ENCODE measurements at regions of chr20 and their contacts with region 1.

Region 1: GRCh38 chr20:1802385-1803060 is 92.7 kb upstream of the SIRPA start:
- DNase-seq: peak; percentile 56
- H3K4me3 Mint-ChIP-seq: peak overlapping the region; percentile 1
- H3K27ac Mint-ChIP-seq: no peak overlapping the region
- H3K4me1 Mint-ChIP-seq: peaks cover 10% of the 10 kb centered on the region
- H3K27me3 Mint-ChIP-seq: peaks cover 40% of the 10 kb centered on the region

Region 2: GRCh38 chr20:1830240-1830639 is 27.7 kb after region 1 on chr20:
- CTCF ChIA-PET with region 1: no interaction called
- POLR2A ChIA-PET with region 1: no interaction called
- intact Hi-C with region 1: no loop called
- DNase-seq: no peak
- H3K4me3 Mint-ChIP-seq: no peak overlapping the region
- H3K27ac Mint-ChIP-seq: no peak overlapping the region
- H3K4me1 Mint-ChIP-seq: no peaks in the 10 kb centered on the region
- H3K27me3 Mint-ChIP-seq: peaks cover 12% of the 10 kb centered on the region

Region 3: DNA sequence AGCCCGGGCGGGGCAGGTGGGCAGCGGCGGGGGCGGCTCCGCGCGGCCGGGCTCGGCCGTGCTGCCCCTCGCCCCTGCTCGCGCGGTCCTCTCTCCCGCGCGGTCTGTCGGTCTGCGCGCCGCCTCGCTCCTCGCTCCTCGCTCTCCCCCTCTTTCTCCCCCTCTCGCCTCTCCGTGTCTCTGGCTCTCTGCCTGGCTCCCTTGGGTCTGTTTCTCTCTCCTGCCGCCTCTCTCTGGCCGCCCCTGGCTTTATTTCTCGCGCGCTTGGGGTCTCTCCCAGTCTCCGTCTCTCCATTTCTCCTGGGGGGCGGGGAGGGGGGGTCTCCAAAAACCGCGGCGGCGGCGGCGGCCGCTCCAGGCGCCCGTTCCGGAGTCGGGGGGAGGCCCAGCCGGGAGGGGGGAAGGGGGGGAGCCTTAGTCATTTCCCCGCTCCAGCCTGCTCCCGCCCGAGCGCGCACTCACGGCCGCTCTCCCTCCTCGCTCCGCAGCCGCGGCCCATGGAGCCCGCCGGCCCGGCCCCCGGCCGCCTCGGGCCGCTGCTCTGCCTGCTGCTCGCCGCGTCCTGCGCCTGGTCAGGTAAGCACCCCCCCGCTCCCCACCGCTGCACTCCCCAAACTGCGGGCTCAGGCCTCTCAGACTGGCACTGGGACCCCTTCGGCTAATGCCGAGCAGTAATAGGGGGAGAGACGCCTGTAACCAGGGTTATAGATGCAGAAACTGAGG is 92.6 kb after region 1 on chr20 and contains the start of gene SIRPA:
- CTCF ChIA-PET with region 1: no interaction called
- POLR2A ChIA-PET with region 1: no interaction called
- intact Hi-C with region 1: loop called (anchors 10 kb)
- DNase-seq: no peak
- H3K4me3 Mint-ChIP-seq: peak within 1 kb of the TSS; percentile 57
- H3K27ac Mint-ChIP-seq: no peak within 1 kb of the TSS
- H3K4me1 Mint-ChIP-seq: no peaks in the 10 kb centered on the region
- H3K27me3 Mint-ChIP-seq: peaks cover 43% of the 10 kb centered on the region
- total RNA-seq, gene SIRPA: not detected

Measured in activated CD4-positive, alpha-beta memory T cell treated with anti-CD3 and anti-CD28 coated beads for 36 hours (primary cell).